ENCODE measurements at regions of chr9 and their contacts with region 1.

Region 1: DNA sequence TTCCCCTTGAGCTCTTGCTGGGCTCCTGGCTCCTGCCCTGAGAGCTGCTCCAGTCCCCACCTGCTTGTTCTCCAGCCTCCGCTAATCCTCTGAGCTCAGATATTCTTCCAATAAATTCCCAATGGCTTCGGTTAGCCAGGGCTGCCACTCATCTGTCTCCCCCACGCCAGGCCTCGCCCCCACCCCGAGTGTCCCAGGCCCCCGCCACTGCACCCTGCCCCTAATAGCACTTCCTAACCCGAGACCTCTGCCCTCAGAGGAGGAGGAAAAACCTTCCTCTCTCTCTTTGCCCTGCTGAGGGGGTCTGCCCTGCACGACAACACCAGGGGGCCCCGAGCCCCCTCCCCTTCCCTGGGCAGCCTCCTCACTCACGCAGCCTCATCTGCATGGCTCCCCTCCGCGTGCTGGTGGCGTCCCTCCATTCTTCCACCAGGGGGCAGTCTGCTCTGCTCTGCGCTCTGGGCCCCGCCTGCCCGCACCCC is 5.4 kb upstream of the LCN15 start:
- DNase-seq: peak; percentile 82
- ATAC-seq: peak; percentile 84
- H3K4me3 Mint-ChIP-seq: no peak overlapping the region
- H3K27ac Mint-ChIP-seq: no peak overlapping the region
- H3K4me1 Mint-ChIP-seq: peaks cover 19% of the 10 kb centered on the region
- H3K27me3 Mint-ChIP-seq: peaks cover 7% of the 10 kb centered on the region

Region 2: GRCh38 chr9:136726631-136727191 is 43.0 kb before region 1 on chr9:
- CTCF ChIA-PET with region 1: no interaction called
- POLR2A ChIA-PET with region 1: no interaction called
- intact Hi-C with region 1: no loop called
- DNase-seq: peak; percentile 75
- ATAC-seq: peak; percentile 52
- H3K4me3 Mint-ChIP-seq: peak overlapping the region; percentile 100
- H3K27ac Mint-ChIP-seq: peak overlapping the region; percentile 97
- H3K4me1 Mint-ChIP-seq: peaks cover 31% of the 10 kb centered on the region
- H3K27me3 Mint-ChIP-seq: no peaks in the 10 kb centered on the region

Region 3: GRCh38 chr9:136750526-136750925 is 19.2 kb before region 1 on chr9:
- CTCF ChIA-PET with region 1: interaction called, 4 read pairs
- POLR2A ChIA-PET with region 1: no interaction called
- intact Hi-C with region 1: loop called in 1 of 2 experiments (anchors 1 kb)
- DNase-seq: no peak
- ATAC-seq: peak; percentile 97
- H3K4me3 Mint-ChIP-seq: no peak overlapping the region
- H3K27ac Mint-ChIP-seq: no peak overlapping the region
- H3K4me1 Mint-ChIP-seq: peaks cover 12% of the 10 kb centered on the region
- H3K27me3 Mint-ChIP-seq: peaks cover 8% of the 10 kb centered on the region

Region 4: GRCh38 chr9:136784249-136784996 is 14.7 kb after region 1 on chr9:
- CTCF ChIA-PET with region 1: interaction called, 4 read pairs
- POLR2A ChIA-PET with region 1: no interaction called
- intact Hi-C with region 1: loop called in 1 of 2 experiments (anchors 1 kb)
- DNase-seq: no peak
- ATAC-seq: no peak
- H3K4me3 Mint-ChIP-seq: no peak overlapping the region
- H3K27ac Mint-ChIP-seq: no peak overlapping the region
- H3K4me1 Mint-ChIP-seq: peaks cover 9% of the 10 kb centered on the region
- H3K27me3 Mint-ChIP-seq: peaks cover under 1% of the 10 kb centered on the region